A673 (cell line): ENCODE measurements at regions of chr10 and their contacts with region 1.

Region 1: DNA sequence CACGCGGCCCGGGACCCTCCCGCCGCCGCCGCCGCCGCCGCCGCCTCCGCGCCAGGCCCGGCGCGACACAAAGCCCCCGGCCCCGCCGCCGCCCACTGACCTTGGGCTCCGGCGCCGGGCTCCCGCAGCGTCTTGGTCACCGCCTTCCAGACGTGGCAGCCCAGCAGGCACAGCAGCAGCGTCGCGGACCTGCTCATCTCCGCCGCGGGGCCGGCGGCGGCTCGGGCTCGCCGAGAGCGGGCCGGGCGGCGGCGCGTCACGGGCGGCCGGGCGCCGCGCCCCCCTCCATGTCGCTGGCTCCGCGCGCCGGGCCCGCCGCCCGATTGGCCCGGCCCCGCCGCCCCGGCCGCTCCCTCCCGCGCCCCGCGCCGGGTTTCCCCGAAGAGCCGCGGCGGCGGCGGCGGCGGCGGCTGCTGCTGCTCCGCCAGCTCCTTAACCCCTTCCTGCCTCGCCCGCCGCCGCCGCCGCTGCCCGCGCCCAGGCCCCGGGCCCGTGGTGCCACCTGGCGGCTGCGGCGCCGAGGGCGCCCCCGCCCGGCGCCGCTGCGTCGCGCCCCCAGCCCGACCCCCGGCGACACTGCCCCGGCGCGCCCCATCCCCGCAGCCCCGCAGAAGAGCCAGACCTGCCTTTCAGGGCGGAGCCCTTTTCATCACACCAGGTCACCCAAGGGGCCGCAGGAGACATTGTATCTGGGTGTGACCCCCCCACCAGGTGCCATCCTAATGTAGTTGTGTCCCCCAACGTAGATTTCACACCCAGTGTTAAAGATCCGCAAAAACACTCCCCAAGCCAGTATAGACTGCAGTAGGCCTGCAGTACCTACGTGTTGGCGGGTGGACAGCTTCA is at the start of gene FAM171A1:
- DNase-seq: peak; percentile 76
- H3K4me3 ChIP-seq: peak within 1 kb of the TSS; percentile 67
- H3K27ac ChIP-seq: peak within 1 kb of the TSS; percentile 88
- H3K4me1 ChIP-seq: peaks cover 6% of the 10 kb centered on the region
- H3K27me3 ChIP-seq: no peaks in the 10 kb centered on the region
- CTCF ChIP-seq: no peak; the same call in 1 of the 2 replicates
- total RNA-seq, gene FAM171A1: 46.5 and 47.1 TPM in 2 replicates

Region 2: GRCh38 chr10:15168781-15169554 is 202.1 kb before region 1 on chr10:
- CTCF ChIA-PET with region 1: interaction called, 10 read pairs
- POLR2A ChIA-PET with region 1: no interaction called
- intact Hi-C with region 1: no loop called
- DNase-seq: peak; percentile 92
- H3K4me3 ChIP-seq: no peak overlapping the region
- H3K27ac ChIP-seq: no peak overlapping the region
- H3K4me1 ChIP-seq: peaks cover 26% of the 10 kb centered on the region
- H3K27me3 ChIP-seq: no peaks in the 10 kb centered on the region
- CTCF ChIP-seq: no peak

Region 3: DNA sequence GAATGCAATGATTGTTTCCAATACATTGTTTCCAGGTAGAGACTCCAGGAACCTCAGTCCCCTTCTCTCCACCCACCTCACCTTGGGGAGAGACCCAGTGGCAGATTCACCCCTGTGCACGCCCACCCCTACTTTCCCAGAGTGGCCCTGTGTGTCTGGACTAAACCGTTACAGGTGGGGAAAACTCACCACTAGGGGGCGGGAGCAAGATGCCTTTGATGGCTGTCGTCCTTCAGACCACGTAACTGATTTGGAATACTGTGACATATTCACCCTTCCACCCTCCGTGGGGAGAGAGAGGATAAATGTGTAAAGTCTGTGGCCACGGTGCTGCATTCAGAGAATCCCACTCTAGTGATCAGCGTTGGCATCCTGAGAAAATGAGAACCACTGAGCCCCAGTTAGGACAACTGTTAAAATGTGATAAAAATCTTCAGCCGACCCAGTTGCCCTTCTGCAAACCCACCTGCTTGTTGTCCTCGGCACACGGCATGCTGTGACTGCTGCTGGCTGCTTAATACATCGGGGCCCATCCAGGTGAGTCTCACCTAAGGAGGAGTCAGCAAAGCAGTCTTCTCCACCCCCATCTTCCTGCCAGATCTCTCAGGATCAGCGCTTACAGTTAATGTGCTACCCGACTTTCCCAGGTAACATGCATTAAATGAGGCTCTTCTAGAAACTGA is 161.1 kb before region 1 on chr10:
- CTCF ChIA-PET with region 1: no interaction called
- POLR2A ChIA-PET with region 1: no interaction called
- intact Hi-C with region 1: loop called (anchors 2 kb)
- DNase-seq: peak; percentile 82
- H3K4me3 ChIP-seq: no peak overlapping the region
- H3K27ac ChIP-seq: no peak overlapping the region
- H3K4me1 ChIP-seq: no peaks in the 10 kb centered on the region
- H3K27me3 ChIP-seq: no peaks in the 10 kb centered on the region
- CTCF ChIP-seq: peak; percentile 95

Region 4: GRCh38 chr10:15262036-15262713 is 108.9 kb before region 1 on chr10:
- CTCF ChIA-PET with region 1: interaction called, 3 read pairs
- POLR2A ChIA-PET with region 1: no interaction called
- intact Hi-C with region 1: loop called (anchors 5 kb)
- DNase-seq: peak; percentile 28
- H3K4me3 ChIP-seq: no peak overlapping the region
- H3K27ac ChIP-seq: no peak overlapping the region
- H3K4me1 ChIP-seq: no peaks in the 10 kb centered on the region
- H3K27me3 ChIP-seq: no peaks in the 10 kb centered on the region
- CTCF ChIP-seq: peak; percentile 39; the same call in 1 of the 2 replicates

Region 5: GRCh38 chr10:15419279-15419874 is 48.3 kb after region 1 on chr10:
- CTCF ChIA-PET with region 1: no interaction called
- POLR2A ChIA-PET with region 1: no interaction called
- intact Hi-C with region 1: no loop called
- DNase-seq: peak; percentile 67
- H3K4me3 ChIP-seq: no peak overlapping the region
- H3K27ac ChIP-seq: no peak overlapping the region
- H3K4me1 ChIP-seq: no peaks in the 10 kb centered on the region
- H3K27me3 ChIP-seq: no peaks in the 10 kb centered on the region
- CTCF ChIP-seq: peak; percentile 89

Region 6: GRCh38 chr10:15802375-15802949 is 431.4 kb after region 1 on chr10:
- CTCF ChIA-PET with region 1: no interaction called
- POLR2A ChIA-PET with region 1: no interaction called
- intact Hi-C with region 1: no loop called
- DNase-seq: peak; percentile 10
- H3K4me3 ChIP-seq: no peak overlapping the region
- H3K27ac ChIP-seq: no peak overlapping the region
- H3K4me1 ChIP-seq: no peaks in the 10 kb centered on the region
- H3K27me3 ChIP-seq: no peaks in the 10 kb centered on the region
- CTCF ChIP-seq: no peak